SK-N-SH (cell line): ENCODE measurements at regions of chr10 and their contacts with region 1.

Region 1: DNA sequence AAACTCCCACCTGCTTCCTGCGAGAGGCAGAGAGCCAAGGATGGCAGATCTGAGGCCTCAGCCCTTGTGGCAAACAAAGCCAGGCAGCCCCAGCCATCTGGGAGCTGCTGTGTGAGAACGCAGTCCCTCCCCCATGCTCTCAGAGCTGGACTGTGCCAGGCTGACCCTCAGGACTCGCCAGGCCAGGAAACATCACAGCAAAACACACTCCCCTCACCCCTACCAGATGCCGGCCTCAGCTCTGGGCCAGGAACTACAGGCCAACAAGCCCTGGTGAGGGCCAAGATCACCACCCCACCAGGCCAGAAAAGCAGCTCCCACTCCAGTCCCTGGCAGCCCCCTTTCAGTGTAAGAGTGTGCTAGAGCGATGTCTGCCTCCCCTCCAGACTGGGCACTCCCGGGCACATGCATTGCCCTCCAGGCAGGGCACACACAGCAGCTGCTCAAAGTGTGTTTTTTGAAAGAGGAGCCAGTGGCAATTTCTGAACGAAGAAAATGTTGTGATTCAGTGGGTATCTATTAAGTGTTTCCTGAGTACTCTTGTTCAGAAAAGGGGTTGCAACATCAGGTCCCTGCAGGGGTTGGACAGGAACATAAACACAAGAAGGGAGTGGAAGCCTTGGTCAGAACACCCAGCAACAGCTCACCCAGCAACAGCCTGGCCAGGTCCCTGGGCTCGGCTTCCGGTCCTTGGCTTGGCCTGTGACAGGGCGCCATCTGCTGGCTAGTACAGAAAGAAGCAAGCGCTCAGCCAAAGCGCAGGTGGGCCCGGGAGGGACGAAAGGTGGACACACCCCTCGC is 18.3 kb downstream of the LRRC20 start:
- DNase-seq: peak; percentile 88
- H3K4me3 ChIP-seq: peak overlapping the region in 1 of 2 experiments; percentile 14; a peak in 1 of 4 replicates
- H3K27ac ChIP-seq: peak overlapping the region; percentile 60 to 96
- H3K4me1 ChIP-seq: peaks cover 6 to 15% of the 10 kb centered on the region in 2 experiments; a peak in 3 of 4 replicates
- H3K27me3 ChIP-seq: no peaks in the 10 kb centered on the region
- CTCF ChIP-seq: peak; percentile 92
- EP300 ChIP-seq: peak; percentile 6 to 77; a peak in 2 of 4 replicates
- RAD21 ChIP-seq: peak; percentile 99

Region 2: DNA sequence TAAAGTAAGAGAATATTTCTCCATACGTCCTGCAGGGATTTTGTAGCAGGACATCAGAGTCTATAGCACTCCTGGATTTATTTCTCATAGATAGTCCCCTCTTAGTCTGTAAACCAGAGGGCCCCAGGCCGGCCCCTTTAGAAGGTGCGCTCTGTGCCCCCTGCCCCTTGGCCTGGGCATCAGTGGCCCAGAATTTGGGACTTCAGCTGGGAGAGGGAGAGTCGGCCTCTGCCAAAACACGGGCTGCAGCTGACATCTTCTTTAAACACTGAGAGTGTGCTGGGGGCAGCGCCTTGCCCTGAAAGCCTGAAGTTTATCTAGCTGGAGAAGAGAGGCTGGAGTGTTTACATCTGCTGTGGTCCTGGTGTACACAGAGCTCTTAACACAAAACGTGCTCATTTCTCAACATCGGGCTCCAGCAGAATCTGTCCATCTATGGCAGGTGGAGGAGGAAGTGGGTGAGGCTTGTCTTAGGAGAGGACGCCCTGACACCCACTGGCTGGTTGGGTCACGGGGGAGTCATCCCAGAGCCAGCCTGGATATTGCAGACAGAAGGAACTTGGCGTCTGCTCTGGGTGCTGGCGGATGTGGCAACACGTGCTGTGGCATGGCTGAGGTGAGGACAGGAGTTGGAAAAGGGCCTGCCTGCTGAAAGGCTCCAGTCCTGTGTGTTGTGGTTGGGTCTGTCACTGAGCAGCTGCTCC is 942.4 kb before region 1 on chr10:
- CTCF ChIA-PET with region 1: no interaction called
- POLR2A ChIA-PET with region 1: no interaction called
- DNase-seq: no peak
- H3K4me3 ChIP-seq: no peak overlapping the region
- H3K27ac ChIP-seq: no peak overlapping the region
- H3K4me1 ChIP-seq: no peaks in the 10 kb centered on the region
- H3K27me3 ChIP-seq: no peaks in the 10 kb centered on the region; the same call in 1 of the 2 replicates
- CTCF ChIP-seq: no peak
- EP300 ChIP-seq: no peak
- RAD21 ChIP-seq: no peak

Region 3: GRCh38 chr10:69914398-69915214 is 449.6 kb before region 1 on chr10:
- CTCF ChIA-PET with region 1: no interaction called
- POLR2A ChIA-PET with region 1: no interaction called
- DNase-seq: peak; percentile 87
- H3K4me3 ChIP-seq: no peak overlapping the region; a peak in 1 of 4 replicates
- H3K27ac ChIP-seq: no peak overlapping the region
- H3K4me1 ChIP-seq: peaks cover 0 to 5% of the 10 kb centered on the region in 2 experiments; a peak in 1 of 4 replicates
- H3K27me3 ChIP-seq: no peaks in the 10 kb centered on the region
- CTCF ChIP-seq: peak; percentile 90
- EP300 ChIP-seq: no peak
- RAD21 ChIP-seq: peak; percentile 94

Region 4: GRCh38 chr10:70212879-70213278 is 151.3 kb before region 1 on chr10:
- CTCF ChIA-PET with region 1: interaction called, 214 read pairs
- POLR2A ChIA-PET with region 1: no interaction called
- DNase-seq: no peak
- H3K4me3 ChIP-seq: no peak overlapping the region
- H3K27ac ChIP-seq: no peak overlapping the region
- H3K4me1 ChIP-seq: no peaks in the 10 kb centered on the region
- H3K27me3 ChIP-seq: no peaks in the 10 kb centered on the region
- CTCF ChIP-seq: no peak
- EP300 ChIP-seq: no peak
- RAD21 ChIP-seq: no peak

Region 5: DNA sequence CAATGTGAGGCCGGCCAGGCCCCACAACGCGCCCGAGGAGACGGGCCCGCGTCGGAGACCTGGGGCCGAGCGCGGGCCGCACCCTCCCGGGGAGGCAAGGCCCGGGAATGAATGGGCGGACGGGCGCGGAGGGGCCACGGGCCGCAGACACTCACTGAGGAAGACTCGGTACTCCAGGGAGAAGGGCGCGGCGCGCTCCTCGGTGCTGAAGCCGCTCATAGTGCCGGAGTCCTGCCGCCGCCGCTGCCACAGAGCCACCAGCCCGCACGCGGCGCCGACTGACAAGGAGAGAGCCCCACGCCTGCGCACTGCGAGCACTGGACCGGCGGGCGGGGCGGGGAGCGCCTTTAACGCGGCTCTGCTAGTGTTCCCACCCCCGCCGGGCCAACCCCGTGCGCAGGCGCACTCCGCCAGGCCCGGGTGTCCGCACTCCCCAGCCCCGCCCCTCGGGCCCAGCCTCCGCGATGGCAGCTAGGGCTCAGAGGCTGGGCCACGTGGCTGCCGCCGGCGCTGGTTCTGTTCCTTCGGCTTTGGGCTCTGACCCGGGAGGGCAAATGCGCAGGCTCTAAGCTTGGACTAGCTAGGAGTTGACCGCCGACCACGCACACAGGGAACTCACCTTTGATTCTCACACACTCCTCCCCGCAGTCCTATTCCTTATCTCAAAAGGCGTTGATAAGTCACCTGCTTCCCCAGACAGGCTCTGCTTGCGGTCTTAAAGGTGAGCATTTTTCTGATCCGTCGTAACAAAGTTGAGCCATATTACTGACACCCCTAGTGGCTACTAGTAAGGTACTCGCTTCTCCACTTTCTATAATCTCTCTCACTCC is 130.8 kb before region 1 on chr10 and contains the start of gene PPA1:
- CTCF ChIA-PET with region 1: interaction called, 48 read pairs
- POLR2A ChIA-PET with region 1: interaction called, 7 read pairs
- DNase-seq: peak; percentile 100
- H3K4me3 ChIP-seq: peak within 1 kb of the TSS; percentile 93 to 94
- H3K27ac ChIP-seq: peak within 1 kb of the TSS; percentile 51 to 55
- H3K4me1 ChIP-seq: peaks cover 0 to 6% of the 10 kb centered on the region in 2 experiments; a peak in 3 of 4 replicates
- H3K27me3 ChIP-seq: no peaks in the 10 kb centered on the region
- CTCF ChIP-seq: peak; percentile 29
- EP300 ChIP-seq: no peak
- RAD21 ChIP-seq: 0 out of 2 replicates have a peak, but pooled peaks have one; percentile 3
- polyA plus RNA-seq, gene PPA1: 116 and 125 TPM in 2 replicates

Region 6: DNA sequence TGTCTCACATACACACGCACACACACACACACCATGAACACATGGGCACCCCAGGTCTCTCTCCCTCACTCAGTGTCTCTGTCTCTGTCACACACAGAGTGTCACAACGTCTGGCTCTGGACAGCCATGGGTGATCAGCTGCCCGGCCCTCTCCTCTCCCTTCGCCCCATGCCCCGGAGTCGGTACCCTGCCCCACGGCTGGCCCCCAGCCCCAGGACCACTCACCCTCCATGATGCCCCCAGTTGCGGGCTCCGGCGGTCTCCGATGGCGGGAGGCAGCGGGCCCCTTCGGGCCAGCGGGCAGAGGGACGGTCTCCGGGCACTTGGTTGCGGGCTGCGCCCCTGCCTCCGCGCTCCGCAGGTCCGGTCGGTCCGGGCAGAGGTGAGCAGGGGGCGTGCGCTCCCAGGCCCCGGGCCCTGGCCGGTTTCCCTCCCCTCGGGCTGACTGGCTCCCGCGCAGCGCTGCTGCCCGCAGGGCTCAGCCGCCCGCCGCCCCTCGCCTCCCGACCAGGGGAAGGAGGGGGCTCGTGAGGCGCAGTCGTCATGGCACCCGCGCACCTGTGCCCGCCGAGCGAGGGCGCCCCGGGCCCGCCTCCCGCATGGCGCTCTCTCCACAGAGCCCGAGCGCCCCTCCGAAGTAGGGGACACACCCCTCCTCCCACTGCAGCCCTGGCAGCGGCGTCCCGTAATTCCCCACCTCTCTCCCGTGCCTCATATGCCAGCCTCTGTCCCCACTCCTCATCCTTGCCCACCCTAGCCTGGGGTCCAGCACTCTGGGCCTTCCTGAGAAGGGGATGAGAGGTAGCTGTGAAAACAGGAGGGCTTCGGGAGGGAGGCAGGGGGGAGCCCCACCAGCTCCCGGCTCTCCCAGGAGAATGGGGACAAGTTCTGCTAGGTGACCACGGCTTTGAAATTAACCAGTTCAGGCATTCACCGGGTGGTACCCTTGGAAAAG is 80.4 kb before region 1 on chr10 and contains the start of gene NPFFR1:
- CTCF ChIA-PET with region 1: interaction called, 27 read pairs
- POLR2A ChIA-PET with region 1: no interaction called
- DNase-seq: peak; percentile 75
- H3K4me3 ChIP-seq: peak within 1 kb of the TSS in 1 of 2 experiments; percentile 37; a peak in 2 of 4 replicates
- H3K27ac ChIP-seq: no peak within 1 kb of the TSS
- H3K4me1 ChIP-seq: peaks cover 0 to 5% of the 10 kb centered on the region in 2 experiments; a peak in 1 of 4 replicates
- H3K27me3 ChIP-seq: peaks cover 32% of the 10 kb centered on the region
- CTCF ChIP-seq: no peak
- EP300 ChIP-seq: no peak
- RAD21 ChIP-seq: peak; percentile 43; the same call in 1 of the 2 replicates
- polyA plus RNA-seq, gene NPFFR1: not detected in 2 replicates

Region 7: DNA sequence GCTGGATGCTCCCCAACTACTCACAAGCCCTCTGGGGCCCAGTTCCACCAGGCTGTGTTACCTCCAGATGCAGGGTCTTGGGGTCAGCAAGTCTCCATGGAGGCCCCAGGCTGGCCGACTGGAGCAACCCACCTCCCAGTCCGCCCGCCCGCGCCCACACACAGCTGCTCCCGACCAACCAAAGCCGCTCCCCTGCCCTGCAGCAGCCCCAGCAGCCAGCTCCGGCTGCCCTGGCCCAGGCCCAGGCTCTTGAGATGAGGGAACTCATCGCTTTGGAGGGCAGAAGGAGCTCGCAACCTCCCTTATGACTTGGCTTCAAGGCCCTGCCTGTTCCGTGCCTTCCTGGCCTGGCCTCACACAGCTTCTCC is 28.9 kb before region 1 on chr10:
- CTCF ChIA-PET with region 1: interaction called, 13 read pairs
- POLR2A ChIA-PET with region 1: no interaction called
- DNase-seq: no peak
- H3K4me3 ChIP-seq: no peak overlapping the region
- H3K27ac ChIP-seq: peak overlapping the region in 1 of 2 experiments; percentile 56; a peak in 1 of 4 replicates
- H3K4me1 ChIP-seq: peaks cover 14 to 39% of the 10 kb centered on the region in 2 experiments; a peak in 3 of 4 replicates
- H3K27me3 ChIP-seq: no peaks in the 10 kb centered on the region
- CTCF ChIP-seq: no peak
- EP300 ChIP-seq: no peak
- RAD21 ChIP-seq: no peak

Region 8: DNA sequence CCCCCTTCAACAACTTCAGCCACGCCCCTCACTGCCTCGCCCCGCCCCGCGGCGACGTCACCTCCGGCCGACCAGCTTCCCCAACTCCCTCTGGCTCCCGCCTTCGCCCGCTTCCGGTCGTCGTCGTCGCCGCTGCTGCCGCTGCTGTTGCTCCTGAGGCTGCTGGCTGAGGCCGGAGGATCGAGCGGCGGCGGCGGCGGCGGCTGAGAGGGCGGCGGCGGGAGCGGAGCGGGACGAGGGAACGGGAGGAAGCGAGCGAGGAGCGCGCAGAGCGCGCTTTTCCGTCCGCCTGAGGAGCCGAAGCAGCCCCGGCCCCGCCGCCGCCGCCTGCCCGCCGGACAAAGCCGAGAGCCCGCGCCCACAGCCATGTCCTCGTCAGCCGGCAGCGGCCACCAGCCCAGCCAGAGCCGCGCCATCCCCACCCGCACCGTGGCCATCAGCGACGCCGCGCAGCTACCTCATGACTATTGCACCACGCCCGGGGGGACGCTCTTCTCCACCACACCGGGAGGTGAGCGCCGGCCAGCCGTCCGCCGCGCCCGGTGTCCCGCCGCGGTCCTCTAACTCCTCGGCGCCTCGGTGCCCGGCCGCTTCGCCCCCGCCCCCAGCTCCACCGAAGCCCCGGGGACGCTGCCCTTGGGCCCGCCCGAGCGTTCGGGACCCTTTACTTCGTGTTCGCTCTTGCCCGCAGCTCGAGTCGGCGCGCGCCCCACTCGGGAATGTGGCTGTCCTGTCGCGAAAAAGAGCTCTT is 40.0 kb after region 1 on chr10 and contains the start of gene EIF4EBP2:
- CTCF ChIA-PET with region 1: interaction called, 21 read pairs
- POLR2A ChIA-PET with region 1: interaction called, 5 read pairs
- DNase-seq: peak; percentile 96
- H3K4me3 ChIP-seq: peak within 1 kb of the TSS; percentile 91 to 93
- H3K27ac ChIP-seq: peak within 1 kb of the TSS; percentile 74
- H3K4me1 ChIP-seq: peaks cover 10 to 18% of the 10 kb centered on the region in 2 experiments
- H3K27me3 ChIP-seq: no peaks in the 10 kb centered on the region
- CTCF ChIP-seq: no peak
- EP300 ChIP-seq: no peak
- RAD21 ChIP-seq: no peak
- polyA plus RNA-seq, gene EIF4EBP2: 9.9 and 12.7 TPM in 2 replicates

Region 9: GRCh38 chr10:70482982-70483760 is 119.0 kb after region 1 on chr10:
- CTCF ChIA-PET with region 1: no interaction called
- POLR2A ChIA-PET with region 1: no interaction called
- DNase-seq: peak; percentile 70
- H3K4me3 ChIP-seq: no peak overlapping the region
- H3K27ac ChIP-seq: peak overlapping the region in 1 of 2 experiments; percentile 72; a peak in 1 of 4 replicates
- H3K4me1 ChIP-seq: peaks cover 0 to 48% of the 10 kb centered on the region in 2 experiments; a peak in 1 of 4 replicates
- H3K27me3 ChIP-seq: peaks cover 10% of the 10 kb centered on the region; the same call in 1 of the 2 replicates
- CTCF ChIP-seq: no peak
- EP300 ChIP-seq: no peak
- RAD21 ChIP-seq: no peak

Region 10: GRCh38 chr10:70546584-70546983 is 182.4 kb after region 1 on chr10:
- CTCF ChIA-PET with region 1: no interaction called
- POLR2A ChIA-PET with region 1: no interaction called
- DNase-seq: no peak
- H3K4me3 ChIP-seq: no peak overlapping the region
- H3K27ac ChIP-seq: no peak overlapping the region
- H3K4me1 ChIP-seq: no peaks in the 10 kb centered on the region; a peak in 2 of 4 replicates
- H3K27me3 ChIP-seq: 0 out of 2 replicates have a peak, but pooled peaks cover 5% of the 10 kb centered on the region
- CTCF ChIP-seq: no peak
- EP300 ChIP-seq: no peak
- RAD21 ChIP-seq: no peak